ENCODE measurements at regions of chr6 and their contacts with region 1.

Region 1: GRCh38 chr6:72084992-72085569 is 198.7 kb downstream of the RIMS1 start:
- DNase-seq: no peak
- ATAC-seq: no peak
- H3K4me3 ChIP-seq: no peak overlapping the region
- H3K4me3 Mint-ChIP-seq: no peak overlapping the region
- H3K27ac ChIP-seq: no peak overlapping the region
- H3K27ac Mint-ChIP-seq: no peak overlapping the region
- H3K4me1 ChIP-seq: no peaks in the 10 kb centered on the region
- H3K4me1 Mint-ChIP-seq: no peaks in the 10 kb centered on the region
- H3K27me3 ChIP-seq: no peaks in the 10 kb centered on the region
- H3K27me3 Mint-ChIP-seq: no peaks in the 10 kb centered on the region

Region 2: GRCh38 chr6:70270287-70271005 is 1814.6 kb before region 1 on chr6:
- CTCF ChIA-PET with region 1: no interaction called
- POLR2A ChIA-PET with region 1: no interaction called
- intact Hi-C with region 1: no loop called
- DNase-seq: no peak
- ATAC-seq: no peak
- H3K4me3 ChIP-seq: no peak overlapping the region
- H3K4me3 Mint-ChIP-seq: no peak overlapping the region
- H3K27ac ChIP-seq: no peak overlapping the region
- H3K27ac Mint-ChIP-seq: no peak overlapping the region
- H3K4me1 ChIP-seq: no peaks in the 10 kb centered on the region
- H3K4me1 Mint-ChIP-seq: no peaks in the 10 kb centered on the region
- H3K27me3 ChIP-seq: peaks cover 0 to 4% of the 10 kb centered on the region in 2 donors
- H3K27me3 Mint-ChIP-seq: peaks cover 3 to 47% (median 22%) of the 10 kb centered on the region in 5 donors

Region 3: GRCh38 chr6:71383901-71384489 is 701.1 kb before region 1 on chr6:
- CTCF ChIA-PET with region 1: no interaction called
- POLR2A ChIA-PET with region 1: no interaction called
- intact Hi-C with region 1: loop called (anchors 2 to 10 kb)
- DNase-seq: peak in 1 of 9 donors; percentile 3
- ATAC-seq: no peak
- H3K4me3 ChIP-seq: no peak overlapping the region
- H3K4me3 Mint-ChIP-seq: no peak overlapping the region
- H3K27ac ChIP-seq: no peak overlapping the region
- H3K27ac Mint-ChIP-seq: no peak overlapping the region
- H3K4me1 ChIP-seq: no peaks in the 10 kb centered on the region
- H3K4me1 Mint-ChIP-seq: no peaks in the 10 kb centered on the region
- H3K27me3 ChIP-seq: no peaks in the 10 kb centered on the region
- H3K27me3 Mint-ChIP-seq: peaks cover 0 to 19% (median 13%) of the 10 kb centered on the region in 5 donors

Region 4: GRCh38 chr6:71533939-71534379 is 551.1 kb before region 1 on chr6:
- CTCF ChIA-PET with region 1: no interaction called
- POLR2A ChIA-PET with region 1: no interaction called
- intact Hi-C with region 1: loop called (anchors 1 to 10 kb)
- DNase-seq: no peak
- ATAC-seq: no peak
- H3K4me3 ChIP-seq: no peak overlapping the region
- H3K4me3 Mint-ChIP-seq: no peak overlapping the region
- H3K27ac ChIP-seq: no peak overlapping the region
- H3K27ac Mint-ChIP-seq: no peak overlapping the region
- H3K4me1 ChIP-seq: no peaks in the 10 kb centered on the region
- H3K4me1 Mint-ChIP-seq: no peaks in the 10 kb centered on the region
- H3K27me3 ChIP-seq: no peaks in the 10 kb centered on the region
- H3K27me3 Mint-ChIP-seq: peaks cover 0 to 12% (median 10%) of the 10 kb centered on the region in 5 donors

Region 5: DNA sequence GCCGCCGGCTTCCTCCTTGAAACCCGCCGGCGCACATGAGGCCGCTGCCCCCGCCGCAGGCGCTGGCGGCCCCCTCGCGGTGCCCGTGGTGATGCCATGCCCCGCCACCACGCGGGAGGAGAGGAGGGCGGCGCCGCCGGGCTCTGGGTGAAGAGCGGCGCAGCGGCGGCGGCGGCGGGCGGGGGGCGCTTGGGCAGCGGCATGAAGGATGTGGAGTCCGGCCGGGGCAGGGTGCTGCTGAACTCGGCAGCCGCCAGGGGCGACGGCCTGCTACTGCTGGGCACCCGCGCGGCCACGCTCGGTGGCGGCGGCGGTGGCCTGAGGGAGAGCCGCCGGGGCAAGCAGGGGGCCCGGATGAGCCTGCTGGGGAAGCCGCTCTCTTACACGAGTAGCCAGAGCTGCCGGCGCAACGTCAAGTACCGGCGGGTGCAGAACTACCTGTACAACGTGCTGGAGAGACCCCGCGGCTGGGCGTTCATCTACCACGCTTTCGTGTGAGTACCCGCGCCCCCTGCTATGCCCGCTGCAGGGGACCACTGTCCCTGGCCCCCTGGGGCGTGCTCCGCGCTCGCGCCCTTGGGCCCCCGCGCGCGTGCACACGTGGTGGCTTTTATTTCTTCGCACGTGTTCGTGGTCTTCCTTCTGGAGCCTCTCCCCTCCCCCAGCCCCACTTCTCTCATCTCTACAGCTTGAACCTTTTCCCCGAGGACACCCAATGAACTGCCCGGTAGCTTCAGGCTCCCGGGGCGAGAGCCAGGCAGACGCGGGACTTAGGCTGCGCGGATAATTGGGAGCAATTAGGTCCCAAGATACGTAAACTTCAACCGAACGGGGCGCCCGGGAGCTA is 537.2 kb after region 1 on chr6:
- CTCF ChIA-PET with region 1: no interaction called
- POLR2A ChIA-PET with region 1: no interaction called
- intact Hi-C with region 1: no loop called
- DNase-seq: peak; percentile 51 to 72 (median 60)
- ATAC-seq: peak; percentile 72
- H3K4me3 ChIP-seq: peak overlapping the region; percentile 82
- H3K4me3 Mint-ChIP-seq: peak overlapping the region; percentile 90 to 98 (median 94)
- H3K27ac ChIP-seq: peak overlapping the region; percentile 52
- H3K27ac Mint-ChIP-seq: peak overlapping the region; percentile 23 to 88 (median 76)
- H3K4me1 ChIP-seq: peaks cover 14 to 27% of the 10 kb centered on the region in 2 donors
- H3K4me1 Mint-ChIP-seq: peaks cover 39 to 69% (median 51%) of the 10 kb centered on the region in 7 donors
- H3K27me3 ChIP-seq: no peaks in the 10 kb centered on the region
- H3K27me3 Mint-ChIP-seq: no peaks in the 10 kb centered on the region

Measured in naive thymus-derived CD4-positive, alpha-beta T cell (primary cell).